A549 (cell line): ENCODE measurements at regions of chr20 and their contacts with region 1.

Region 1: GRCh38 chr20:5529331-5530148 is 212.8 kb upstream of the PROKR2 start:
- DNase-seq: peak; percentile 77 to 87
- ATAC-seq: peak; percentile 91 to 93
- H3K4me3 ChIP-seq: 0 out of 3 replicates have a peak overlapping the region, but pooled peaks have one; percentile 14
- H3K27ac ChIP-seq: peak overlapping the region; percentile 17 to 50; a peak in 4 of 6 replicates
- H3K4me1 ChIP-seq: peaks cover 16% of the 10 kb centered on the region
- CTCF ChIP-seq: peak; percentile 91
- EP300 ChIP-seq: no peak; a peak in 1 of 5 replicates
- POLR2A ChIP-seq: no peak
- RAD21 ChIP-seq: peak; percentile 93

Region 2: DNA sequence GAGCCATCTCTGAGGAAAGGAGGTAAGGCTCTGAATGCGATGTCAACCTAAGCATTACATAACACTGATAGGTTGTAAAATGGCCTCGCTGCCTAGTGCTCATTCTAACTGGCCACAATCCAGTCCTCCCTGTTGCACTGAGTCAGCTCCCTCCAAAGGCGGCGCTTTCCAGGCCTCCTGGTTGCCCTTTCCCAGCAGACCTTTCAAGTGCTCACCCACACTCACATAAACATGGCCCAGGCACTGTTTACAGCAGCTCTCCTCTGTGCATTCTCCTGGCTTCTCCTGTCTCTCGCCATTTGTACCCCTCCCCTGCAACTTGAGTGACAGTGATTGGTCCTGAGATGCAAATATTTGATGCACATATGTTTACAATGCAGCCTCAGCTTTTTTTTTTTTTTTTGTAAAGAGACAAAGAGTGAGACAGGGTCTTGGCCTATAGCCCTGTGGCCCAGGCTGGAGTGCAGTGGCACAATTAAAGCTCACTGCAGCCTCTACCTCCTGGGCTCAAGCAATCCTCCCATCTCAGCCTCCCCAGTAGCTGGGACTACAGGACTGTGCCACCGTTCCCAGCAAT is 844.6 kb before region 1 on chr20:
- CTCF ChIA-PET with region 1: no interaction called
- POLR2A ChIA-PET with region 1: no interaction called
- DNase-seq: peak in 1 of 2 experiments; percentile 33
- ATAC-seq: no peak
- H3K4me3 ChIP-seq: no peak overlapping the region
- H3K27ac ChIP-seq: peak overlapping the region; percentile 96 to 98
- H3K4me1 ChIP-seq: peaks cover 37% of the 10 kb centered on the region
- CTCF ChIP-seq: no peak
- EP300 ChIP-seq: no peak
- POLR2A ChIP-seq: no peak
- RAD21 ChIP-seq: no peak

Region 3: DNA sequence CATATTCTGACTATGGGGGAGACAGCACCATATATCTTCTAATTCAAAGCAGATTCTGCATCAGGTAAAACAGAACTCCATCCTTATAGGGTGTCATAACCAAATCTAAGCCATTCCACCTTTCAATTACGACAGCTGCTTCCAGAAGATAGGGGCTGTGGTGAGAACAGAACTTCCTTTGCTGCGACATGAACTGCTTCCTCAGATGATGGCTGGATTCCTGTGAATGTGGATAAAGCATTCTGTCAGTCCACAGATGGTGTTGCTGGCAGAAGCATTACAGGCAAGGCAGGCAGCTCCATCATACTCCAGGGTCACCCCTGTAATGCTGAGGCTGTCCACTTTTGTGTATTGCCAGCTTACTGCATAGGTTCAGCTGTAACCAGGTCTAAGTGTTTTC is 40.7 kb before region 1 on chr20:
- CTCF ChIA-PET with region 1: no interaction called
- POLR2A ChIA-PET with region 1: no interaction called
- DNase-seq: no peak
- ATAC-seq: no peak
- H3K4me3 ChIP-seq: no peak overlapping the region
- H3K27ac ChIP-seq: no peak overlapping the region
- H3K4me1 ChIP-seq: no peaks in the 10 kb centered on the region
- CTCF ChIP-seq: no peak
- EP300 ChIP-seq: no peak
- POLR2A ChIP-seq: no peak
- RAD21 ChIP-seq: no peak

Region 4: DNA sequence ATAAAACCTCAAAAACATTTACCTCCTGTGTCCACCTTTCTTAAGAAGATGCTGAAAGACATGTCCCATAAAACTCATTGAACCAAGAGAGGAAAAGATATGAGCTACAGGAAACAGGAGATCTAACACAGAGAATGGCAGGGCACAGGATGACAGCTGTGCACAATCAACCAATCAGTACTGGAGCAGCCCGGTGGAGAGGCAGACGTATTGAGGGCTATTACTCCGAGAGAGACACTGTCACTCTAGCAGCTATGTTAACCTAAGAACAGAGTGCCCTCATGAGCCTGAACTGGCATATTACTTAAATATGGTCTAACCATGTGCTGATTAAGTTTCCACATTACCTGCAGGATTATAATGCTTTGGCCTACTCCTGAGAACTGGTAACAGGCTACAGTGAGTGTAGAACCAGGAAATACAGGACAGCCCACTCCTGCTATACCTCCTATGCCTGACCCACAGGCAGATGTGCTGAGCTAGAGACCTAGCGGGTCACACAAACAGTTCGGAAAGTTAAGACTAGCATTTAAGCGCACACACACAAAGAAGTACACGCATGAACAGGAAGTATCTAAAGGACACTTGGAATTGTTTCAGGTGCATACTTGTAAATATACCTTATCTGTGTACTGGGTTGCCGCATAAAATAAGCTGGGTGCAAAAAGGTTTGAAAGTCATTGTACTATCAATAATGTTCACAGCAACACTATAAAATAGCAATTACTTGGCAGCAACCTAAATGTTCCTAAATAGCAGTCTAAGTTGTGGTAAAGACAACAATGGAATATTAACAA is 21.4 kb after region 1 on chr20:
- CTCF ChIA-PET with region 1: interaction called, 23 read pairs
- POLR2A ChIA-PET with region 1: no interaction called
- DNase-seq: no peak
- ATAC-seq: peak; percentile 48 to 63; a peak in 5 of 6 replicates
- H3K4me3 ChIP-seq: no peak overlapping the region
- H3K27ac ChIP-seq: no peak overlapping the region
- H3K4me1 ChIP-seq: peaks cover 9% of the 10 kb centered on the region; the same call in 2 of the 3 replicates
- CTCF ChIP-seq: no peak
- EP300 ChIP-seq: no peak
- POLR2A ChIP-seq: no peak
- RAD21 ChIP-seq: no peak

Region 5: GRCh38 chr20:5608442-5609161 is 79.1 kb after region 1 on chr20:
- CTCF ChIA-PET with region 1: interaction called, 11 read pairs
- POLR2A ChIA-PET with region 1: no interaction called
- DNase-seq: peak in 1 of 2 experiments; percentile 52
- ATAC-seq: no peak
- H3K4me3 ChIP-seq: peak overlapping the region; percentile 79
- H3K27ac ChIP-seq: peak overlapping the region; percentile 54 to 92
- H3K4me1 ChIP-seq: peaks cover 53% of the 10 kb centered on the region
- CTCF ChIP-seq: no peak
- EP300 ChIP-seq: no peak
- POLR2A ChIP-seq: no peak
- RAD21 ChIP-seq: no peak

Region 6: GRCh38 chr20:5674176-5674660 is 144.7 kb after region 1 on chr20:
- CTCF ChIA-PET with region 1: no interaction called
- POLR2A ChIA-PET with region 1: no interaction called
- DNase-seq: no peak
- ATAC-seq: peak; percentile 39 to 43; a peak in 3 of 6 replicates
- H3K4me3 ChIP-seq: no peak overlapping the region
- H3K27ac ChIP-seq: peak overlapping the region; percentile 4 to 19; a peak in 2 of 6 replicates
- H3K4me1 ChIP-seq: peaks cover 16% of the 10 kb centered on the region
- CTCF ChIP-seq: no peak
- EP300 ChIP-seq: no peak
- POLR2A ChIP-seq: no peak
- RAD21 ChIP-seq: no peak

Region 7: GRCh38 chr20:5835321-5835821 is 305.8 kb after region 1 on chr20:
- CTCF ChIA-PET with region 1: interaction called, 10 read pairs
- POLR2A ChIA-PET with region 1: no interaction called
- DNase-seq: peak; percentile 38 to 54
- ATAC-seq: peak; percentile 86
- H3K4me3 ChIP-seq: no peak overlapping the region
- H3K27ac ChIP-seq: peak overlapping the region; percentile 30 to 60; a peak in 5 of 6 replicates
- H3K4me1 ChIP-seq: peaks cover 23% of the 10 kb centered on the region
- CTCF ChIP-seq: no peak
- EP300 ChIP-seq: peak in 1 of 2 experiments; percentile 50; a peak in 1 of 5 replicates
- POLR2A ChIP-seq: no peak
- RAD21 ChIP-seq: no peak; a peak in 1 of 5 replicates

Region 8: GRCh38 chr20:5950271-5951031 is 420.9 kb after region 1 on chr20 and contains the starts of genes MCM8 and TRMT6:
- CTCF ChIA-PET with region 1: interaction called, 12 read pairs
- POLR2A ChIA-PET with region 1: no interaction called
- DNase-seq: peak; percentile 96 to 98
- ATAC-seq: peak; percentile 98 to 100
- H3K4me3 ChIP-seq: peak within 1 kb of the TSS; percentile 93
- H3K27ac ChIP-seq: peak within 1 kb of the TSS; percentile 93 to 94
- H3K4me1 ChIP-seq: peaks cover 38% of the 10 kb centered on the region
- CTCF ChIP-seq: no peak
- EP300 ChIP-seq: no peak
- POLR2A ChIP-seq: peak; percentile 89
- RAD21 ChIP-seq: 0 out of 5 replicates have a peak, but pooled peaks have one; percentile 6 to 26
- polyA plus RNA-seq, gene MCM8: 29.5 and 36.1 TPM in 2 replicates
- polyA plus RNA-seq, gene TRMT6: 30.8 and 43.1 TPM in 2 replicates

Region 9: GRCh38 chr20:6044115-6044514 is 514.6 kb after region 1 on chr20:
- CTCF ChIA-PET with region 1: interaction called, 10 read pairs
- POLR2A ChIA-PET with region 1: no interaction called
- DNase-seq: peak in 1 of 2 experiments; percentile 32
- ATAC-seq: peak; percentile 15 to 62; a peak in 4 of 6 replicates
- H3K4me3 ChIP-seq: no peak overlapping the region
- H3K27ac ChIP-seq: no peak overlapping the region
- H3K4me1 ChIP-seq: no peaks in the 10 kb centered on the region
- CTCF ChIP-seq: no peak
- EP300 ChIP-seq: no peak
- POLR2A ChIP-seq: no peak
- RAD21 ChIP-seq: no peak